ENCODE measurements at regions of chr7 and their contacts with region 1.

Region 1: GRCh38 chr7:95511716-95512260 is 26.0 kb downstream of the ASB4 start:
- DNase-seq: peak; percentile 67
- ATAC-seq: peak; percentile 94
- H3K4me3 Mint-ChIP-seq: no peak overlapping the region
- H3K27ac Mint-ChIP-seq: no peak overlapping the region
- H3K4me1 Mint-ChIP-seq: peaks cover 3% of the 10 kb centered on the region; the same call in 1 of the 2 replicates
- H3K27me3 Mint-ChIP-seq: peaks cover 4% of the 10 kb centered on the region; the same call in 1 of the 2 replicates
- CTCF ChIP-seq: peak; percentile 78

Region 2: DNA sequence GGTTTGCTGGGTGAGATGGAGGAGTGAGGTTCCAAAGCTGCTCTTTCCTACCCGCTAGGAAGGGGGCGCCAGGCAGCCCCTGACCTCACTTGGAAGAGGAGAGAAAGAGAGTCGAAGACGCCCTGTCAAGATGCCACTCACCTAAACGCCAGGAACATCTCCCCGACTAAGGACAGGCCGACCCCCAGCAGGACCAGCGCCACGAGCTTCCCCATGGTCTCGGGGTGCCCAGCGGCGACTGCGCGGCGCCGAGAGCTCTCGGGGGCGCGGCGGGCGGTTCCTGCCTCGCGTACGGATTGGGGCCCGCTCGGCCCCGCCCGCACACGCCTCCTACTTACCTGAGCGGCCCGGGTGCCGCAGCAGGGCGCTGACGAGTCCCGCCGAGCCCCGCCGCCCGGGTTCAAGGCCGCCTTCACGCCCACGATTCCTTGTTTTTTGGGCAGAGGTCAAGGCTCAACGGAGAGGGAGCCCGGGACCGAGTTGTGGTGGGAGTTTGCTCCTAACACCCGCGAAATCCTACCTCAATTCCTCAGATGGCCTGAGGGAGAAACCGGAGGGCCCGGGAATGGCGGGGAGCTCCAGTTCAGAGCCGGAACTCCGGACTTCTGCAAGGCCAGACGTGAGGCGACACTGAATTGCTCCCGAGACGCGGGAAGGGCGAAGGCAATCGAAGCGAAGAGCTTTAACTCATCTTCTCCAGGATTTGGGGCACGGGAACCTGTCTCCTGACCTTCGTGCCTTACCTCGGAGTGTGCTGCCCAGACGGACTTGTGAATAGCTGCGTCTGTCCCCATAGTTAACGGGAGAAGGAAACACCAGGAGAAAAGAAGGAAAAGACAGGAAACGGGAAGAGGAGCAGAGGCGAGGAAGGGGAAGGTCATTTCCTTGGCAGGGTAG is 115.4 kb before region 1 on chr7 and contains the start of gene PON3:
- CTCF ChIA-PET with region 1: interaction called, 11 read pairs
- POLR2A ChIA-PET with region 1: no interaction called
- DNase-seq: peak; percentile 66
- ATAC-seq: peak; percentile 95
- H3K4me3 Mint-ChIP-seq: peak within 1 kb of the TSS; percentile 76
- H3K27ac Mint-ChIP-seq: no peak within 1 kb of the TSS; the same call in 1 of the 2 replicates
- H3K4me1 Mint-ChIP-seq: peaks cover 20% of the 10 kb centered on the region
- H3K27me3 Mint-ChIP-seq: peaks cover 15% of the 10 kb centered on the region
- CTCF ChIP-seq: peak; percentile 40; the same call in 1 of the 2 replicates
- total RNA-seq, gene PON3: 0.37 to 0.62 TPM (median 0.42 TPM) in 3 replicates

Region 3: GRCh38 chr7:95527033-95527775 is 15.4 kb after region 1 on chr7:
- CTCF ChIA-PET with region 1: interaction called, 14 read pairs
- POLR2A ChIA-PET with region 1: no interaction called
- DNase-seq: peak; percentile 62
- ATAC-seq: peak; percentile 96
- H3K4me3 Mint-ChIP-seq: no peak overlapping the region
- H3K27ac Mint-ChIP-seq: no peak overlapping the region
- H3K4me1 Mint-ChIP-seq: peaks cover 3% of the 10 kb centered on the region; the same call in 1 of the 2 replicates
- H3K27me3 Mint-ChIP-seq: no peaks in the 10 kb centered on the region; the same call in 1 of the 2 replicates
- CTCF ChIP-seq: peak; percentile 60; the same call in 1 of the 2 replicates

Region 4: DNA sequence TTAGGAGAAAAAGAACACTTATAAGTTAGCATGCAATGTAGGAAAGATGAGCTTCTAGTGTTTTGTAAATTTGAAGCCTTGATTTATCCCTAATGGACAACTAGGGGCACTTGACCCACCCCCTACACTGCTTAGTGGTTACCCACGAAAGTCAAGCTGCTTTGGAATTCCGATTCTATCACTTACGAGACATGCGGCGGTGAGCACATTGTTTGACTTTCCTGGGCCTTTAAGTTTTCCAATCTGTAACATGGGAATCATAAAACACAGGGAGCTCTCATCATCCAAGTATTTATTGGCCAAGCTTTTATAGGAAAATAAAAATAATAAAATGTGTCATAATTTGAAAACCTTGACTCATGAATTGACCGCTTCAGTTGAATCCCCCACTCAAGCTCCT is 163.2 kb after region 1 on chr7:
- CTCF ChIA-PET with region 1: interaction called, 11 read pairs
- POLR2A ChIA-PET with region 1: interaction called, 3 read pairs
- DNase-seq: no peak
- ATAC-seq: no peak
- H3K4me3 Mint-ChIP-seq: no peak overlapping the region
- H3K27ac Mint-ChIP-seq: no peak overlapping the region
- H3K4me1 Mint-ChIP-seq: no peaks in the 10 kb centered on the region
- H3K27me3 Mint-ChIP-seq: no peaks in the 10 kb centered on the region
- CTCF ChIP-seq: no peak

Region 5: DNA sequence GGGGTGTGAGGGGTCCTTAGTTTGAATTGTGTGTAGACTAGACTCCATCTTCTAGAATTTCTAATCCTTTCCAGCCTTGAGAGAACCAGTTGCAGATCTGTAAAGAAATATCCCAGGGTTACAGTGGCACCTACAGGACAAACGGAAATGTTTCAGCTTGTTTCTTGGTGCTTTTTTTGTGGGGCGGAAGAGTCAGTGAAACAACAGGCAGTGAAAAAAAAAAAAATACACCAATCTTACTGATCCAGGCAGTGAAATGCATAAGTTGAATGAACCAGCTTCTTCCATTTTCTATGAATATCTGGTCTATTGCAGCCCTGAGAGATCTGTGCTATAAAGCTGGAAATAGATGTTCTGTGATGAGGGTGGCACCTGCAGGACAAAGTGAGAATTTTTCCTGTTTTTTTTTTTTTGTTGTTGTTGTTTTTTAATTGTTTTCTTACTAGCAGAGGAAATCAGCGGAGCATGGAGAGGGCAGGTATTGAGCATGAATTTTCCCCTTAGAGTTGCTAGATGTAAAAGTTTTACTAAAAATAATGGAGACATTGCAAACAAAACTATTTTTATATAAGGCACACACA is 178.7 kb after region 1 on chr7:
- CTCF ChIA-PET with region 1: interaction called, 232 read pairs
- POLR2A ChIA-PET with region 1: no interaction called
- DNase-seq: no peak
- ATAC-seq: peak; percentile 64
- H3K4me3 Mint-ChIP-seq: peak overlapping the region; percentile 29
- H3K27ac Mint-ChIP-seq: no peak overlapping the region
- H3K4me1 Mint-ChIP-seq: peaks cover 6% of the 10 kb centered on the region; the same call in 1 of the 2 replicates
- H3K27me3 Mint-ChIP-seq: no peaks in the 10 kb centered on the region
- CTCF ChIP-seq: peak; percentile 60